ENCODE measurements at regions of chr19 and their contacts with region 1.

Region 1: GRCh38 chr19:48333467-48334384 is 8.4 kb downstream of the EMP3 start:
- DNase-seq: peak; percentile 96
- H3K4me3 Mint-ChIP-seq: peak overlapping the region; percentile 90
- H3K27ac Mint-ChIP-seq: peak overlapping the region; percentile 96
- H3K4me1 Mint-ChIP-seq: peaks cover 49% of the 10 kb centered on the region
- H3K27me3 Mint-ChIP-seq: no peaks in the 10 kb centered on the region

Region 2: GRCh38 chr19:48279747-48280146 is 54.0 kb before region 1 on chr19:
- CTCF ChIA-PET with region 1: no interaction called
- DNase-seq: no peak
- H3K4me3 Mint-ChIP-seq: no peak overlapping the region
- H3K27ac Mint-ChIP-seq: no peak overlapping the region
- H3K4me1 Mint-ChIP-seq: no peaks in the 10 kb centered on the region
- H3K27me3 Mint-ChIP-seq: peaks cover 6% of the 10 kb centered on the region

Region 3: GRCh38 chr19:48315712-48316111 is 18.0 kb before region 1 on chr19:
- CTCF ChIA-PET with region 1: interaction called, 179 read pairs
- DNase-seq: no peak
- H3K4me3 Mint-ChIP-seq: no peak overlapping the region
- H3K27ac Mint-ChIP-seq: peak overlapping the region; percentile 38
- H3K4me1 Mint-ChIP-seq: peaks cover 11% of the 10 kb centered on the region
- H3K27me3 Mint-ChIP-seq: peaks cover 33% of the 10 kb centered on the region

Region 4: DNA sequence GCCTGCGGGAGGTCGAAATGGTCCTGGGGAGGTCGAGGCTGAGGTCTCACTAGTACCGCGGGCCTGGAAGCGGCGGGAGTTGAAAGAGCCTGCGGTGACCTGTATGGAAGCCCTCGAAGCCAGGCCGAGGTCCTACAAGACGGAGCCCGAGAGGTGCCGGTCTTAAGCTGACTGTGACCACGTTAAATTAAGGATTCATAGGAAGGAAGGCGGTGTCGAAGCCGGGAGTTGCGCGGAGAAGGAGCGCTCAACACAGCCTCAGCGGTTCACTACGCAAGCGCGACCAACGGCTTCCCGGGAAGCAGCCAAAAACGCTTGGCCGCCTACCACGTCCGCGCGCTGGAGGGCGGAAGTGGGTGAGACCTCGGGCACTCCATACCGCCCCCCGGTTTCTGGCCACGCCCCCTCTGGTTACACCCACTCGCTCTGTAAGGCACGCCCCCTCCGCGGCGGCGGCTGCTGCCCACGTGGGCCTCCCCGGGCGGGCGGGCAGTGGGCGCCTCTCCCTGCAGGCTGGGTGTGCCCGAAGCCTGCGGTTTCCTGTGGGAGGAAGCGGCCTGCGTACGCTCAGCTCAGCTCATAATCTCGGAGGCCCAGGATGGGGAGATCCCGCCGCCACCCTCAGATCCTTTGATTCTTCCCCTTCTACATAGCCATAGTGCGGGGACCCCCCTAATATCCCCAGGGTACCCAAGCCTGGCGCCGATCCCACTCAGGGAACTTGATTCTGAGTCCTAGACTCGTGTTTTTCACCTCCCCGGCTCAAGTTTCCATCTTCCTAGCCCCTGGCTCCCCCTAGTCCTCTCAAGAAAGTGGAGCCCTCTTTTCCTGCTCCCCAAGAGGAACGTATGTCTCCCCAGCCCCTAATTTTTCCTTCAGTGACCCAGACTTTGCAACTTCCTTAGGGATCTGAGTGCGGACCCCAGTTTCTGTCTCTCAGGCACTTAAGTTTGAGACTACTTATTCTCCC is 11.8 kb before region 1 on chr19:
- CTCF ChIA-PET with region 1: interaction called, 179 read pairs
- DNase-seq: peak; percentile 99
- H3K4me3 Mint-ChIP-seq: peak overlapping the region; percentile 92
- H3K27ac Mint-ChIP-seq: peak overlapping the region; percentile 97
- H3K4me1 Mint-ChIP-seq: peaks cover 61% of the 10 kb centered on the region
- H3K27me3 Mint-ChIP-seq: peaks cover 13% of the 10 kb centered on the region

Region 5: DNA sequence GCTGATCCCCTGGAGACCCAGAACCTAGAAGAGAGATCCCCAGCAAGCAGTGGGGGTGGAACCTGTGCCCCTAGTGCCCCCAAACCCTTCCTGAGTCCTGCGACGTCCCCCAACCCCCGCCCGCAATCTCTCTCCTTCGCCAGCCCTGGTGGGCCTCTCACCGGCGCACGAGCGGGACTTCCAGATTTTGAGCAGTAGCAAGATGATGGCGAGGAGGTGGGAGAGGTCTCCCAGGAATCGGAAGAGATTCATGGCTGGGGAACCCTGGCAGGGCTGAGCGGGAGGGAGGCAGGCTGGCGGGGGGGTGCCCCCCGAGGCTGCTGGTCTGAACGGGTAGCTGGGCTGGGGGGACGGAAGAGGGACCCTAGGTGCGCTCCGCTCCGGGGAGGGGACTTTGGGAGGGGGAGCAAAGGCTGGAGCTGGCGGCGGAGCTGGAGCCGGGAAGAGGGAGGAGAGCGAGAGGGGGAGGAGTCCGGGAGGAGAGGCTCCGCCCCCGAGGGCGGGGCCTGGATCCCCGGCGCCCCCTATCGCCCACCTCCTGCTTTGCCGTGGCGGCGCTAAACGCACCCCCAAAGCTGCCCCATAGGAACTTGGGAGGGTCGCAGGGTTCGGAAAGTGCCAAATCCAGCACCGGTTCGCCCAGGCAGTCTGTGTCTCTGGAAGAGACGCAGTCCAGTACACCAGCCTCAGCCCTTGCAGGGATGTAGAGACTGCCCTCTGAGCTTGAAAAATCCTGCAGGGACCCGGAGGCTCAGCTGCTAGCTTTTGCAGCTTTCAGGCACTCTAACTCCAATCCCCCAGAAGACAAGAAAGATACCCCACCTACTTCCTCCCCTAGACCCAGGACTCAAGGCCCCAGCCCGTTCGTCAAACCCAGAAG is 57.6 kb after region 1 on chr19 and contains the start of gene KDELR1:
- CTCF ChIA-PET with region 1: interaction called, 16 read pairs
- DNase-seq: peak; percentile 78
- H3K4me3 Mint-ChIP-seq: peak within 1 kb of the TSS; percentile 95
- H3K27ac Mint-ChIP-seq: peak within 1 kb of the TSS; percentile 89
- H3K4me1 Mint-ChIP-seq: peaks cover 32% of the 10 kb centered on the region
- H3K27me3 Mint-ChIP-seq: peaks cover 55% of the 10 kb centered on the region